ENCODE measurements at regions of chr6 and their contacts with region 1.

Region 1: GRCh38 chr6:57288115-57288514 is 29.3 kb upstream of the PRIM2 start:
- DNase-seq: no peak
- ATAC-seq: no peak
- H3K4me3 ChIP-seq: no peak overlapping the region
- H3K4me3 Mint-ChIP-seq: no peak overlapping the region
- H3K27ac ChIP-seq: no peak overlapping the region
- H3K27ac Mint-ChIP-seq: no peak overlapping the region
- H3K4me1 ChIP-seq: no peaks in the 10 kb centered on the region
- H3K4me1 Mint-ChIP-seq: no peaks in the 10 kb centered on the region
- H3K27me3 ChIP-seq: peaks cover 0 to 8% of the 10 kb centered on the region in 2 experiments
- H3K27me3 Mint-ChIP-seq: peaks cover 29 to 46% of the 10 kb centered on the region in 2 donors

Region 2: DNA sequence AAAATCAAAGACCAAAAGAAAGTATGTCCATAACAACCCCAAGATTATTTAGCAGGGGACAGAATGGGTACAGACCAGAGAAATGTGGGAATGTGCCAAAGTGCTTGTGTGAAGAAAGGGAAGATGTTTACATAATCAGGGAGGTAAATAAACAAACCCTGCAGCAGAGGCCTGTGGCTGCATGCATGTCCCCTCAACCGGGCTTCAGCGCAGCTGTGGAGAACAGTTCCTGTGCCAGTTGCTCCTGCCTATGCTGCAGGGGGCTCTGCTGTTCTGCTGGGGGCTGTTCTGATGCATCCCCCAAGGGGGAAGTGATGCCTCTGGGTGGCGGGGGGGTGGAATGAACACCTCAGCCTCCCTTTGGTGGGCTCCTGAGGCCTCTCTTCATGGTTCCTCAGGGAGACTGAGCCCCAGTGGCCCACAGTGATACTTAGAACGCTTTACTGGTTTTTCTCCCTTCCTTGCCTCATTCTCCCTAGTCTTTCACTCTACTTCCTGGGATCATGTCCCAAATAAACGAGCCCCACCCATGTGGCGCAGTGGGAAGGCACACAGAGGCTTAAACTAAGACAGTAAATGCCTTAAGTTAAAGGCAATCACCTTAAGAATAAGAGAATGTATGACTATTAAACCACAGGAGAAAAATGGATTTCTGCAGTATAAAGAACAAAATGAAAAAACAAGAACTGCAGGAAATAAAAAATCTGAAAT is 89.0 kb before region 1 on chr6:
- CTCF ChIA-PET with region 1: no interaction called
- POLR2A ChIA-PET with region 1: interaction called in 1 of 2 experiments, 10 read pairs
- DNase-seq: no peak
- ATAC-seq: no peak
- H3K4me3 ChIP-seq: no peak overlapping the region
- H3K4me3 Mint-ChIP-seq: no peak overlapping the region
- H3K27ac ChIP-seq: no peak overlapping the region
- H3K27ac Mint-ChIP-seq: no peak overlapping the region
- H3K4me1 ChIP-seq: no peaks in the 10 kb centered on the region
- H3K4me1 Mint-ChIP-seq: no peaks in the 10 kb centered on the region
- H3K27me3 ChIP-seq: no peaks in the 10 kb centered on the region
- H3K27me3 Mint-ChIP-seq: no peaks in the 10 kb centered on the region

Region 3: GRCh38 chr6:57324538-57324937 is 36.4 kb after region 1 on chr6:
- CTCF ChIA-PET with region 1: no interaction called
- POLR2A ChIA-PET with region 1: no interaction called
- DNase-seq: peak in 1 of 35 experiments; percentile 24
- ATAC-seq: peak in 1 of 4 experiments; percentile 26
- H3K4me3 ChIP-seq: no peak overlapping the region
- H3K4me3 Mint-ChIP-seq: no peak overlapping the region
- H3K27ac ChIP-seq: no peak overlapping the region
- H3K27ac Mint-ChIP-seq: no peak overlapping the region
- H3K4me1 ChIP-seq: no peaks in the 10 kb centered on the region
- H3K4me1 Mint-ChIP-seq: peaks cover 15 to 19% (median 18%) of the 10 kb centered on the region in 3 donors
- H3K27me3 ChIP-seq: no peaks in the 10 kb centered on the region
- H3K27me3 Mint-ChIP-seq: no peaks in the 10 kb centered on the region